Endothelial cell of umbilical vein (primary cell): ENCODE measurements at regions of chr10 and their contacts with region 1.

Region 1: DNA sequence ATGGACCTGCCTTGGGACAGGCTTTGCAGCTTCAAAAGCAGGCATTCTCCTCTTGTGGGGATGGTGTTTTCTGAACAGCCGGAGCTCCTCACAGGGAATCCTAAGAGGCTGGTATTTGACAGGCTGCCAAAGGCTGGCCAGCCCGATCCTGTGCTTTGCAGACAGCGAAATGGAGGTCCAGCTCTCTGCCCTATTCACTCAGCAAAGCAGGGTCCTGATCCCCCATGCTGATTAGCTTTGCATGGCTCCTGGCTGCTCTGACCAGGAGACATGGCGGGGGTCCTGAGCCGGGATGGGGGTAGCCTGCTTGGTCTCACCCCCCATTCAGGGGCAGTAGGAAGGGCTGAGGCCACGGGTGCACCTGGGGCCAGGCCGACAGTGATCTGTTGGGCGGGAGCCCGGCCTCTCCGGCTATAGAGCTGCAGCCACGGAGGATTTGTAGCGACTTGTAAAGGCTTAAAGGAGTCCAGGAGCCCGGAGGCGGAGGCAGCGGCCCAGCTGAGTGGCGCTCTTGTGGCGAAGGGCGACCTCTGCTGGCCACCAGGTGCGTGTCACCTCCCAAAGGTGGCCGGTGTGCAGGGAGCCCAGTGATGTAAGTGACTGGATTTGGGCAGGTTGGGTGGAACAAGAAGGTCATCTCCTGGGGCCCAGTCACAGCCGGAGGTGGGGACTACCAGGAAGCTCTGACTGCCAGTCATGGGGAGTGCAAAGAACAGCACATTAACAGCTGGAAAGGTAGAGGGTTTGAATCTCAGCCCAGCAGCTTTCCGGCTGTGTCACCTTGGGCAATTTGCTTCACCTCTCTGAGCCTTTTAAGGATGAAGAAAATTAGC is 126.5 kb downstream of the ZMIZ1 start:
- DNase-seq: peak; percentile 84
- H3K4me3 ChIP-seq: no peak overlapping the region
- H3K27ac ChIP-seq: no peak overlapping the region
- H3K4me1 ChIP-seq: peaks cover 17% of the 10 kb centered on the region
- H3K27me3 ChIP-seq: no peaks in the 10 kb centered on the region
- CTCF ChIP-seq: peak; percentile 88 to 93
- POLR2A ChIP-seq: no peak

Region 2: GRCh38 chr10:78047314-78047891 is 1147.9 kb before region 1 on chr10:
- CTCF ChIA-PET with region 1: interaction called, 52 read pairs
- POLR2A ChIA-PET with region 1: no interaction called
- dilution Hi-C with region 1: no loop called
- intact Hi-C with region 1: loop called (anchors 1 kb)
- DNase-seq: peak; percentile 86
- H3K4me3 ChIP-seq: no peak overlapping the region
- H3K27ac ChIP-seq: no peak overlapping the region
- H3K4me1 ChIP-seq: peaks cover 6% of the 10 kb centered on the region
- H3K27me3 ChIP-seq: no peaks in the 10 kb centered on the region
- CTCF ChIP-seq: peak; percentile 88 to 89
- POLR2A ChIP-seq: no peak

Region 3: DNA sequence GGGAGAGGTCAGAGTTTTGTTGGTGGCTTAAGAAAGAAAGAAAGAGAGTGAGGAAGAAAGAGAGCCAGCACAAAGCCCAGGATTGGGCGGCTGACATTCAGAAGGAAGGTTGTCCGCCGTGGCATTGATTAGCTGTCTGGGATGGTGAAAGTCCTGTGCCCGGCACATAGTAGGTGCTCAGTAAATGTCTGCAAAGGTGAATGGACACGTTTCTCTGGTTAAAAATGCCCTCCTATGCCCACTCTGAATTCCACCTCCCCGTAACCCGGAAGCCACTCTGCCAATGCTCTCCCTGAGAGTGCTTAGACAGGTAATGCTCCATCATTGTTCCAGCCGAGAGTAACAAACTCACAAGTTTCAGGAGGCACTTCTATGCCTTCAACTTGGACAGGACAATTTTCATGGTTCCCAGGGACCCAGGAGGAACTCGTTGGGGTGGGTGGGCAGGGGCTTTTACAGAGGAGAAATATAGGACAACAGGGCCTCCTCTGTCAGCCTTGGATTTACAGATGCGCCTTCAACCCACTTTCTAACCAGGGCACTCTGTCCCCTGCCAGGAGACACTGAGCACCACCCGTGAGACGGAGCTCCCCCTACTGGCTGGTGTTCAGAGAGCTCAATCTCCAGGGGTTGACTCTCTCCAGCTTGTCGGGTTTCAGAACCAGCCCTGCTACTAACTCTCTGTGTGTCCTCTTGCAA is 538.0 kb before region 1 on chr10:
- CTCF ChIA-PET with region 1: interaction called, 22 read pairs
- POLR2A ChIA-PET with region 1: no interaction called
- dilution Hi-C with region 1: no loop called
- intact Hi-C with region 1: no loop called
- DNase-seq: peak; percentile 50
- H3K4me3 ChIP-seq: no peak overlapping the region
- H3K27ac ChIP-seq: no peak overlapping the region
- H3K4me1 ChIP-seq: peaks cover 4% of the 10 kb centered on the region
- H3K27me3 ChIP-seq: peaks cover 17% of the 10 kb centered on the region in 2 experiments
- CTCF ChIP-seq: peak; percentile 61 to 92
- POLR2A ChIP-seq: no peak

Region 4: DNA sequence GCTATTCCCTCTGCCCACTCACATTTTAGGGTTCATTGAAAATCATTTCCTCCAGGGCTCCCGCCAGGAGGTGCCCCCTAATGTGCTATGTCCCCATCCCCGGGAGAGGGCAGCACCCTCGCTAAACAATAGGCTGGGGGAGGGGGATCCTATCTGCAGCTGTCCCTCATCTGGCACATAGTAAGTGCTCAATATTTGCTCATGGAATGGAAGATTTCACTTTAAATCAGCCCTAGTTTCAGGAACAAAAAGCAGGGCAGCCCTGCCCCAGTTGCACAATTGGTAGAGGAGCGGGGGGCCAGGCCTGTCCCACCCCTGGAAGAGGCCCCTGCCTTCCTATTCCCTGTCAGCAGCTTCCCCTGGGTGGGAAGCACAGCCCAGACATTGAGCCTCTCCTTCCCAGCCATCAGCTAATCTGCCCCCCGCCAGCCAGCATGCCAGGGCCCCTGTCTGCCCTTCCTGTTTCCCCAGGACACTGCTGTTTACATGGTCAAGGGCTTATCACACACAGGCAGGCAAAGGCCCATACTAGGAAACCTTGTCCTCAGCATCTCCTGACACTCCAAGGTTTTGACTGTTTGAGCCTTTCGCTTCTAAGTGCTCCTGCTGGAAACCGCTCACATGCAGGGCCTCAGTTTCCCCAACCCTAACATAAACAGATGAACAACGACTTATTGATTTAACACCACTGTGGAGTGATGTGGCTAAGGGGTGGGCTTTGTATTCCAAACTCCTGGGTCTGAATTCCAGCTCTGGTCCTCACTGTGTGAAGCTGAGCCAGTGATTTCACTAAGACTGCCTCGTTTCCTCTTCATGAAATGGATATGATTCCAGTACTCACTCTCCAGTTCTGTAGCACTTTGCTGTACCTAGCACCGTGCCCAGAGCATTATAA is 257.3 kb before region 1 on chr10:
- CTCF ChIA-PET with region 1: interaction called, 3 read pairs
- POLR2A ChIA-PET with region 1: no interaction called
- dilution Hi-C with region 1: no loop called
- intact Hi-C with region 1: loop called (anchors 1 kb)
- DNase-seq: peak; percentile 83
- H3K4me3 ChIP-seq: no peak overlapping the region
- H3K27ac ChIP-seq: peak overlapping the region; percentile 47
- H3K4me1 ChIP-seq: peaks cover 16% of the 10 kb centered on the region
- H3K27me3 ChIP-seq: no peaks in the 10 kb centered on the region
- CTCF ChIP-seq: peak; percentile 29 to 45
- POLR2A ChIP-seq: no peak

Region 5: DNA sequence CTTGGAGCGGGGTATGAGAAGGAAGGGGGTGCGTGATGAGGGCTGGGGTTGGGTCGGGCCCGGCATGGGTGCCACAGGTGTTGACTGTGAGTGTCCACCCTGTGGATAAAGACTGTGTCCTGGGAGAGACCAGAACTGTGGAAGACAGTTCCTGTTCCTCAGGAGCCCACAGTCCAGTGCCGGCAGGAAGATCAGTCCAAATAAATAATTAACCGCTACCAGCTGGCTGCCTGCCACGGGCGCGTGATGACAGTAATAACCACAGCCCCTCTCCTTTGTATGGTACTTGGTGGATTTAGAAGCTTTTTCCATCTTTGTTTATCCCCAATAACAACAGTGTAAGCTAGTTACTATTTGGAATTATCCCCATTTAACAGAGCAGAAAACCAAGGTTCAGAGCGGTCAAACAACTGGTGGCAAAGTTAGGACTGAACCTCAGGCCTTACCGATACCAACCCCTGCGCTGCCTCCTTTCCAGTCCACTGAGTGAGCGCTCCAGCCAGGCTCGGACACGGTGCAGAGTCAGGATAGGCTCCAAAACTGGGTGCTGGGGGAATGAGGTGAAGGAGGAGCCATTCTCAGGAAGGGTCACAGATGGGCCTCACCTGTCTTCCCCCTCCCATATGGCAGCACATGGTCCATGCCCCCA is 121.4 kb before region 1 on chr10:
- CTCF ChIA-PET with region 1: interaction called, 85 read pairs
- POLR2A ChIA-PET with region 1: no interaction called
- dilution Hi-C with region 1: no loop called
- intact Hi-C with region 1: no loop called
- DNase-seq: peak; percentile 42
- H3K4me3 ChIP-seq: no peak overlapping the region
- H3K27ac ChIP-seq: no peak overlapping the region
- H3K4me1 ChIP-seq: peaks cover 25% of the 10 kb centered on the region
- H3K27me3 ChIP-seq: no peaks in the 10 kb centered on the region
- CTCF ChIP-seq: no peak
- POLR2A ChIP-seq: no peak

Region 6: GRCh38 chr10:79127151-79127961 is 68.0 kb before region 1 on chr10:
- CTCF ChIA-PET with region 1: interaction called, 44 read pairs
- POLR2A ChIA-PET with region 1: no interaction called
- dilution Hi-C with region 1: no loop called
- intact Hi-C with region 1: loop called (anchors 1 kb)
- DNase-seq: peak; percentile 67
- H3K4me3 ChIP-seq: no peak overlapping the region
- H3K27ac ChIP-seq: peak overlapping the region; percentile 21
- H3K4me1 ChIP-seq: peaks cover 49% of the 10 kb centered on the region
- H3K27me3 ChIP-seq: no peaks in the 10 kb centered on the region
- CTCF ChIP-seq: no peak
- POLR2A ChIP-seq: no peak

Region 7: DNA sequence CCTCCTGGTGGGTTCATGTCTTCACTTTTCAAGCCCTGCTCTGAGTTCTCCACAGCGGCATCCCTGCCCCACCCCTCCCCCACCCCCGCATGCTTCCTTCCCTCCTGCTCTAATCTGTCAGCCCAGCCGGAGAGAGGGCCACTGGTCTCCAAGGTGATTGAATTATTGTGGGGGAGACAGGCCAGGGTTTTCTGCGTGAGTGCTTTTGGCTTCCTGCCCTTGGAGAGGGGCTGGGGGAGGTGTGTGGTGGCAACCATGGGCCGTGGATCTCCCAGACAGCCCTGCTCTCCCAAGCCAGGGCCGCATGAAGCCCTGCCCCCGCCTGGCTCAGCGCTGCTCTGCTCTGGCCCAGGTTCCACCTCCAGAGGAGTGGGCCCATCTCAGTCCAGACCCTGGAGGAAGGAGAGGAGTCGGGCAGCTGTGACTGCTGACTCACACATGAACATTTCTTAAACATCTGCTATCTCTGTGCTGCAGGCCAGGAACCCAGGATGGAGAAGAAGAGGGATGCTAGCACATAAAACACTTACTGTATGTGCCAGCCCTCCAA is 16.6 kb before region 1 on chr10:
- CTCF ChIA-PET with region 1: interaction called, 26 read pairs
- POLR2A ChIA-PET with region 1: interaction called, 3 read pairs
- dilution Hi-C with region 1: no loop called
- intact Hi-C with region 1: no loop called
- DNase-seq: peak; percentile 93
- H3K4me3 ChIP-seq: no peak overlapping the region
- H3K27ac ChIP-seq: peak overlapping the region; percentile 64
- H3K4me1 ChIP-seq: peaks cover 57% of the 10 kb centered on the region
- H3K27me3 ChIP-seq: no peaks in the 10 kb centered on the region
- CTCF ChIP-seq: no peak
- POLR2A ChIP-seq: no peak

Region 8: DNA sequence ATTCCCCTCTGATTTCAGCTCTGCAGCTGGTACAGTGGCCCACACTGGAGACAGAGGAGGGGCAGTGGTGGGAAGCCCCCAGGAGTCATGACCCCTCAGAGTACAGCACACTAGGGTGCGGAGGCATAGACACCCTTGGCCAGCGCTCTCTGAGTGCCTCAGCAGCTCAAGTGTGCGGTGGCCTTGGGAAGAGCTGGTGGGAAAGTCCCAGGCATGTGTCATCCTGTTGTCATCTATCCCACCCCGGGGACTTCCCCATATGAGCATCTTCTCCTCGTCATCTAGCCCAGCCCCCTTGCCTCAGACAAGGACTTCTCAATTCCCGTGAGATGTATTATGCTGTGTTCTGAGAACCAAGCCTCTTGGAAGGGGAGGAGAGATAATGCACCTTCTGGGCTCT is 136.4 kb after region 1 on chr10:
- CTCF ChIA-PET with region 1: no interaction called
- POLR2A ChIA-PET with region 1: no interaction called
- dilution Hi-C with region 1: no loop called
- intact Hi-C with region 1: no loop called
- DNase-seq: no peak
- H3K4me3 ChIP-seq: no peak overlapping the region
- H3K27ac ChIP-seq: no peak overlapping the region
- H3K4me1 ChIP-seq: no peaks in the 10 kb centered on the region
- H3K27me3 ChIP-seq: peaks cover 0 to 2% of the 10 kb centered on the region in 2 experiments
- CTCF ChIP-seq: no peak
- POLR2A ChIP-seq: no peak